ENCODE measurements at regions of chrX and their contacts with region 1.

Region 1: GRCh38 chrX:129843459-129844306 is at the start of gene ZDHHC9:
- DNase-seq: peak; percentile 77 to 84
- ATAC-seq: peak; percentile 94 to 95
- H3K4me3 ChIP-seq: peak within 1 kb of the TSS; percentile 68 to 77 (median 72)
- H3K27ac ChIP-seq: peak within 1 kb of the TSS; percentile 76 to 89 (median 84)
- H3K4me1 ChIP-seq: no peaks in the 10 kb centered on the region
- H3K27me3 ChIP-seq: no peaks in the 10 kb centered on the region
- CTCF ChIP-seq: peak in 1 of 5 experiments; percentile 21
- POLR2A ChIP-seq: peak; percentile 54 to 61
- total RNA-seq, gene ZDHHC9: 7.9 to 25.3 (median 14.7) TPM

Region 2: GRCh38 chrX:129654419-129655165 is 189.1 kb before region 1 on chrX and contains the start of gene APLN:
- in situ Hi-C with region 1: loop called in 1 of 4 experiments (anchors 25 kb)
- intact Hi-C with region 1: loop called (anchors 10 kb)
- DNase-seq: no peak
- ATAC-seq: peak; percentile 53
- H3K4me3 ChIP-seq: peak within 1 kb of the TSS; percentile 47 to 62 (median 50)
- H3K27ac ChIP-seq: no peak within 1 kb of the TSS
- H3K4me1 ChIP-seq: peaks cover 0 to 9% of the 10 kb centered on the region in 2 donors
- H3K27me3 ChIP-seq: no peaks in the 10 kb centered on the region
- CTCF ChIP-seq: no peak
- POLR2A ChIP-seq: no peak
- total RNA-seq, gene APLN: not detected

Region 3: DNA sequence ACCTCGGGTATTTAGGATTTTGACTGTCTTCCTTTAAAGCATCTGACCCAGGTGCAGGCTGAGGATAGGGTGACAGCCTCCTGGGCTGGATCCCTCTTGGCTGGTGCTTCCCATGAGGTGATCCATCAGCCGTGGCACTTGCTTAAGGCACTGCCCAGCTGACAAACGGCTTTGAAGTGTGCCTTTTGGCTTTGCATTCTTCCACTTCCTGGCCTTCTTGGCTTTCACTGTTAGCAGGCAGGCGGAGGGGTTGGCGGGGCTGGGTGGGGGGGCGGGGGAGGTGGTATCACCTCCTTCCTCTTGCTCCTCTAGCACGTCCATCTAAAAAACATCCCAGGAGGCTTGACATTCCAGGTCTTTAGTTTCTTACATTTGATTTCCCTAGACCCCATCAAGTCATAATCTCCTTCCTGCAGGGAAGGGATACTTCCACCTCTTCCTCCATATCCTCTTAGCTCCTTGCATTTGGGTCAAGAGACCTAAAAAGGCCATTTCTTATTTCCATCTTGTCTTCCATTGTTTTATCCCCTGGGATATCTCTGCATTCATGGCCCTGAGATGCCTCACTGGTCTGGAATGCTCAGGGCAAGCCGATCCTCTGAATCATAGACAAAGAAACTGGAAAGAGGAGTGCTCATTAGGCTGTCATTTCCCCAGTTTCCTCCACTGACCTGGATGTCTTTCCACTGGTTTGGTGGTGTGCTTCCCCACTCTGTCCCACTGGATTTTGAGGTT is 177.6 kb before region 1 on chrX:
- in situ Hi-C with region 1: no loop called
- intact Hi-C with region 1: no loop called
- DNase-seq: no peak
- ATAC-seq: peak in 1 of 2 donors; percentile 75
- H3K4me3 ChIP-seq: no peak overlapping the region
- H3K27ac ChIP-seq: no peak overlapping the region
- H3K4me1 ChIP-seq: no peaks in the 10 kb centered on the region
- H3K27me3 ChIP-seq: peaks cover 0 to 3% (median 0%) of the 10 kb centered on the region in 3 donors
- CTCF ChIP-seq: no peak
- POLR2A ChIP-seq: no peak

Region 4: GRCh38 chrX:129726307-129727111 is 117.2 kb before region 1 on chrX:
- in situ Hi-C with region 1: no loop called
- intact Hi-C with region 1: no loop called
- DNase-seq: peak; percentile 21 to 37
- ATAC-seq: peak; percentile 54 to 62
- H3K4me3 ChIP-seq: no peak overlapping the region
- H3K27ac ChIP-seq: no peak overlapping the region
- H3K4me1 ChIP-seq: no peaks in the 10 kb centered on the region
- H3K27me3 ChIP-seq: no peaks in the 10 kb centered on the region
- CTCF ChIP-seq: peak; percentile 54 to 78 (median 76)
- POLR2A ChIP-seq: no peak

Region 5: GRCh38 chrX:129872524-129872923 is 28.8 kb after region 1 on chrX:
- in situ Hi-C with region 1: no loop called
- intact Hi-C with region 1: no loop called
- DNase-seq: no peak
- ATAC-seq: no peak
- H3K4me3 ChIP-seq: no peak overlapping the region
- H3K27ac ChIP-seq: no peak overlapping the region
- H3K4me1 ChIP-seq: no peaks in the 10 kb centered on the region
- H3K27me3 ChIP-seq: no peaks in the 10 kb centered on the region
- CTCF ChIP-seq: no peak
- POLR2A ChIP-seq: no peak

Region 6: GRCh38 chrX:129905787-129906580 is 62.3 kb after region 1 on chrX and contains the start of gene UTP14A:
- in situ Hi-C with region 1: no loop called
- intact Hi-C with region 1: loop called (anchors 10 kb)
- DNase-seq: peak; percentile 75 to 84
- ATAC-seq: peak; percentile 99
- H3K4me3 ChIP-seq: peak within 1 kb of the TSS; percentile 61 to 86 (median 81)
- H3K27ac ChIP-seq: peak within 1 kb of the TSS; percentile 82 to 86 (median 86)
- H3K4me1 ChIP-seq: peaks cover 0 to 7% of the 10 kb centered on the region in 2 donors
- H3K27me3 ChIP-seq: no peaks in the 10 kb centered on the region
- CTCF ChIP-seq: no peak
- POLR2A ChIP-seq: peak in 1 of 2 donors; percentile 37
- total RNA-seq, gene UTP14A: 10.0 to 13.9 (median 10.9) TPM